H1 (cell line): ENCODE measurements at regions of chr17 and their contacts with region 1.

Region 1: DNA sequence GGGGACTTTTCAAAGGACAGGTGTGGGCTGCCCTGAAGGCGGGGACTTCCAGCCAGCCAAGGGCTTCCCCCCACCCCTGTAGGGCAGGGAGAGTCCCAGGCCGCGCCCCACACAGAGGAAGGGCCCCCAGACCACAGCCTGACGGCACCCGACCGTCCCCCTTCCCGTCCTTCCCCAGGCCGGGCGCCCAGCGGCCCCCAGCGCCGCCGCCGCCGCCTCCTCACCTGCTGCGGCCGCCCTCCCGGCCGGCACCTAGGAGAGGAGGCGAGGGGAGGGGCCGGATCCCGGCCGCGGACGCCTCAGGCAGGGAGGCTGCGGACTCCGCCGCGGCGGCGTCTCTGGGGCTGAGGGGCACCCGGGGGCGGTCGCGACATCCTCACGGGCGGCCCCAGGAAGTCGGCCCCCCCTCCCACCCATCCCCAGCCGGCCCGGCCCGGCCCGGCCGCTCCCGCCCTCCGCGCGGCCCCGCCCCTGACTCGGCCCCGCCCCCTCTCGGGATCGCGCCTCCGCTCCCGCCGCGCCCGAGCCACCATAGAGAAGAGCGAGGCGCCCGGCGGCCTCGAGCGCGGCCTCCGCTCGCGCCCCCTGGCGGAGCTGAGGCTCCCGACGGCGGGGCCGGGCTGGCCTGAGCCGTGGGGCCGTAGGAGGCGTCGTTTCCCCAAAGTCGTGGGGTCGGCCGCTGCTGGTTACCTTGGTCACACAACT is 25.5 kb upstream of the RFFL start:
- DNase-seq: peak in 1 of 2 experiments; percentile 90
- H3K4me3 ChIP-seq: peak overlapping the region; percentile 53 to 86 (median 76)
- H3K27ac ChIP-seq: peak overlapping the region; percentile 50; the same call in 1 of the 2 replicates
- H3K4me1 ChIP-seq: peaks cover 6 to 23% (median 11%) of the 10 kb centered on the region in 4 experiments
- H3K27me3 ChIP-seq: no peaks in the 10 kb centered on the region
- CTCF ChIP-seq: peak; percentile 83 to 97 (median 83)
- EP300 ChIP-seq: no peak
- POLR2A ChIP-seq: peak in 1 of 2 experiments; percentile 17; a peak in 1 of 3 replicates
- RAD21 ChIP-seq: peak; percentile 41 to 71

Region 2: GRCh38 chr17:34980681-34981537 is 108.1 kb before region 1 on chr17:
- CTCF ChIA-PET with region 1: no interaction called
- POLR2A ChIA-PET with region 1: interaction called, 12 read pairs
- DNase-seq: peak in 1 of 2 experiments; percentile 72
- H3K4me3 ChIP-seq: peak overlapping the region; percentile 72 to 98 (median 76)
- H3K27ac ChIP-seq: peak overlapping the region; percentile 91
- H3K4me1 ChIP-seq: peaks cover 0 to 6% (median 4%) of the 10 kb centered on the region in 4 experiments; a peak in 4 of 7 replicates
- H3K27me3 ChIP-seq: no peaks in the 10 kb centered on the region
- CTCF ChIP-seq: peak; percentile 19 to 26 (median 24); a peak in 3 of 4 replicates
- EP300 ChIP-seq: no peak
- POLR2A ChIP-seq: peak; percentile 45 to 80
- RAD21 ChIP-seq: no peak; a peak in 1 of 4 replicates

Region 3: DNA sequence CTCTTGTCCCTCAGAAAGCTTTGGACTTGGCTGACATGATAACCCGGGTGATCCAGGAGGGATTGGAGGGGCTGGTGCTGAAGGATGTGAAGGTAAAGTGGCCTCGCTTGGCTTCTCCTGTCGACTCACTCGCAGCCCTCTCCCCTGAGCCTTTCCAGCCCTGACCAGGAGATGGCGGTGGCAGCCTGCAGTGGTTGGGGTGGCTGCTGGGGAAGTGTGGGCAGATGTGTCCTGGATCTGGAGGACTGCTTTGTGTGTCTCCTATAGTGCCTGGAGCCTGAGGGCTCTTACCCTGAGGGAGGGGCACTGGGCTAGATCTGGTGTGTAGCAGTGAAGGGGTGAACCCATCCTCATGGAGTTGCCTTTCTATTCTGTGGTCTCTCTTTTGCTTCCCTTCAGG is 90.8 kb before region 1 on chr17:
- CTCF ChIA-PET with region 1: interaction called, 11 read pairs
- POLR2A ChIA-PET with region 1: interaction called, 3 read pairs
- DNase-seq: peak; percentile 31 to 83
- H3K4me3 ChIP-seq: no peak overlapping the region
- H3K27ac ChIP-seq: no peak overlapping the region
- H3K4me1 ChIP-seq: no peaks in the 10 kb centered on the region
- H3K27me3 ChIP-seq: no peaks in the 10 kb centered on the region
- CTCF ChIP-seq: peak; percentile 87 to 93 (median 88)
- EP300 ChIP-seq: no peak
- POLR2A ChIP-seq: no peak
- RAD21 ChIP-seq: peak; percentile 95

Region 4: GRCh38 chr17:35011671-35012210 is 77.3 kb before region 1 on chr17:
- CTCF ChIA-PET with region 1: interaction called, 10 read pairs
- POLR2A ChIA-PET with region 1: interaction called, 7 read pairs
- DNase-seq: no peak
- H3K4me3 ChIP-seq: no peak overlapping the region
- H3K27ac ChIP-seq: no peak overlapping the region
- H3K4me1 ChIP-seq: peaks cover 0 to 8% (median 3%) of the 10 kb centered on the region in 4 experiments; a peak in 3 of 7 replicates
- H3K27me3 ChIP-seq: no peaks in the 10 kb centered on the region
- CTCF ChIP-seq: no peak
- EP300 ChIP-seq: no peak
- POLR2A ChIP-seq: no peak
- RAD21 ChIP-seq: no peak

Region 5: GRCh38 chr17:35063514-35064223 is 25.4 kb before region 1 on chr17 and contains the start of gene RFFL:
- CTCF ChIA-PET with region 1: interaction called, 17 read pairs
- POLR2A ChIA-PET with region 1: interaction called, 8 read pairs
- DNase-seq: peak; percentile 75 to 78
- H3K4me3 ChIP-seq: peak within 1 kb of the TSS in 3 of 4 experiments; percentile 4 to 41 (median 11); a peak in 4 of 8 replicates
- H3K27ac ChIP-seq: peak within 1 kb of the TSS; percentile 64
- H3K4me1 ChIP-seq: peaks cover 0 to 11% (median 5%) of the 10 kb centered on the region in 4 experiments; a peak in 5 of 7 replicates
- H3K27me3 ChIP-seq: no peaks in the 10 kb centered on the region
- CTCF ChIP-seq: no peak
- EP300 ChIP-seq: no peak; a peak in 1 of 3 replicates
- POLR2A ChIP-seq: peak; percentile 16 to 46; a peak in 1 of 3 replicates
- RAD21 ChIP-seq: peak in 1 of 2 experiments; percentile 17; a peak in 1 of 4 replicates
- total RNA-seq, gene RFFL: 20.0 and 24.5 TPM in 2 replicates

Region 6: GRCh38 chr17:35119368-35120165 is 30.5 kb after region 1 on chr17 and contains the start of gene RAD51D:
- CTCF ChIA-PET with region 1: interaction called, 26 read pairs
- POLR2A ChIA-PET with region 1: interaction called, 6 read pairs
- DNase-seq: peak; percentile 66 to 91
- H3K4me3 ChIP-seq: peak within 1 kb of the TSS; percentile 50 to 75 (median 69)
- H3K27ac ChIP-seq: peak within 1 kb of the TSS; percentile 27; the same call in 1 of the 2 replicates
- H3K4me1 ChIP-seq: peaks cover 0 to 4% (median 3%) of the 10 kb centered on the region in 4 experiments; a peak in 4 of 7 replicates
- H3K27me3 ChIP-seq: peaks cover 0 to 14% (median 3%) of the 10 kb centered on the region in 4 experiments; a peak in 3 of 7 replicates
- CTCF ChIP-seq: peak; percentile 87 to 97 (median 95)
- EP300 ChIP-seq: peak in 1 of 2 experiments; percentile 33; a peak in 1 of 3 replicates
- POLR2A ChIP-seq: 0 out of 3 replicates have a peak, but pooled peaks of 1 of the 2 experiments have one; percentile 53
- RAD21 ChIP-seq: peak; percentile 84 to 95
- total RNA-seq, gene RAD51D: 12.9 and 13.7 TPM in 2 replicates

Region 7: DNA sequence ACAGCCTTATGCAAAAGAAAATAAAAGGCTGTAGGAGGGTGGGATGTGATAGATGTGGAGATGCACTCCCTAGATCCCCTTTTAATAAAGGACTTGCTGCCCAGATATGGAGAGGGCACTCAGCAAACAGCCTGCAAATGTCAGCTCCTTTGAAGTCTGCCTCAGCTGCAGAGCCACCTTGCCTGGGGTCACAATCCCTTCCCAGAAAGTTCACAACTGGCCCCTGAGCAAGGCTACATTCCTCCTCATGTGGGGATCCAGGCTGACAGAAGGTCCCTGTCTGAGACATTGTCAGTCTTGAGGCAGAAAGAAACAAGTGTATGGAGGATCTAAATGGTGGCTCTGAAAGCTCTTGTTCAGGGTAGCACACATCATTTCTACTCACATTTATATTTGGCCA is 248.3 kb after region 1 on chr17:
- CTCF ChIA-PET with region 1: no interaction called
- POLR2A ChIA-PET with region 1: no interaction called
- DNase-seq: no peak
- H3K4me3 ChIP-seq: no peak overlapping the region
- H3K27ac ChIP-seq: no peak overlapping the region
- H3K4me1 ChIP-seq: no peaks in the 10 kb centered on the region; a peak in 1 of 7 replicates
- H3K27me3 ChIP-seq: no peaks in the 10 kb centered on the region; a peak in 1 of 7 replicates
- CTCF ChIP-seq: no peak
- EP300 ChIP-seq: no peak
- POLR2A ChIP-seq: no peak
- RAD21 ChIP-seq: no peak